AG04449 (cell line): ENCODE measurements at regions of chr1 and their contacts with region 1.

Region 1: GRCh38 chr1:12596007-12596821 is 21.8 kb downstream of the DHRS3 start:
- DNase-seq: peak; percentile 95
- H3K4me3 ChIP-seq: peak overlapping the region; percentile 41
- CTCF ChIP-seq: no peak

Region 2: GRCh38 chr1:12556368-12556930 is 39.8 kb before region 1 on chr1:
- CTCF ChIA-PET with region 1: no interaction called
- POLR2A ChIA-PET with region 1: interaction called, 12 read pairs
- DNase-seq: peak; percentile 97
- H3K4me3 ChIP-seq: no peak overlapping the region
- CTCF ChIP-seq: no peak

Region 3: GRCh38 chr1:12610305-12610935 is 14.2 kb after region 1 on chr1:
- CTCF ChIA-PET with region 1: interaction called, 14 read pairs
- POLR2A ChIA-PET with region 1: interaction called, 25 read pairs
- DNase-seq: no peak
- H3K4me3 ChIP-seq: no peak overlapping the region
- CTCF ChIP-seq: no peak